Activated B cell treated with CpG ODN at 0.5 μM for 24 hours (primary cell): ENCODE measurements at regions of chrX and their contacts with region 1.

Region 1: DNA sequence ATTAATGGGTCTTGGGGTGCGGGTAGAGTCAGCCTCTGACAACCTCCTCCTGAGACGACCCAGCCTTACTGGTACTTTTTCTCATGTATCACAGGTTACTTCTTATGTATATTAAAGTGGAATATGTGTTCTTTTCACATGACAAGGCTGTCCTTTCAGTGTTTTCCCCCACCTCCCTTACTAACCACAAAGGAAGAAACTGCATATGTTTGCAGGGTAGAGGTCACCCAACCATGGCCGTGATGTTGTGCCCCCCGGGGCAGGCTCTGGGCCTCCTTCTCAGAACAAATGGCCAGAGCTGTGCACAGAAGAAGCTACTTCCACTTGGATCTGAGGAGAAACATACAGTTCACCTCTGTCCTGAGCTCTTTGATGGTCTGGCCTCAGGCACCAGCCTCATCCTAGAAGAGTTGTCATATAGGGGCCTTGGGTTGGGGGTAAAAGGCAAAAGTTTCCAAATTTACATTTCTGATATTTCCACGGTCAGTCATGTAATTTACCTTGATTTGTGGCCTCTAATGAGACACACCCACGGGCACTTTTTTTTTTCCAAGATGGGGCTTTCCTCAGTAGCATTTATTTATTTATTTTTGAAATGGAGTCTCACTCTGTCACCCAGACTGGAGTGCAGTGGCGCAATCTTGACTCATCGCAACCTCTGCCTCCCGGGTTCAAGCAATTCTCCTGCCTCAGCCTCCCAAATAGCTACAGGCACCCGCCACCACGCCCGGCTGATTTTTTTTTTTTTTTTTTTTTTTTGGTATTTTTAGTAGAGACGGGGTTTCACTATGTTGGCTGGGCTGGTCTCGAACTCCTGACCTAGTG is 1.9 kb downstream of the SOWAHD start:
- DNase-seq: no peak
- ATAC-seq: peak; percentile 22
- H3K4me3 Mint-ChIP-seq: peak overlapping the region; percentile 82
- H3K27ac Mint-ChIP-seq: peak overlapping the region; percentile 86
- H3K4me1 Mint-ChIP-seq: peaks cover 74% of the 10 kb centered on the region
- H3K27me3 Mint-ChIP-seq: no peaks in the 10 kb centered on the region
- CTCF ChIP-seq: no peak

Region 2: DNA sequence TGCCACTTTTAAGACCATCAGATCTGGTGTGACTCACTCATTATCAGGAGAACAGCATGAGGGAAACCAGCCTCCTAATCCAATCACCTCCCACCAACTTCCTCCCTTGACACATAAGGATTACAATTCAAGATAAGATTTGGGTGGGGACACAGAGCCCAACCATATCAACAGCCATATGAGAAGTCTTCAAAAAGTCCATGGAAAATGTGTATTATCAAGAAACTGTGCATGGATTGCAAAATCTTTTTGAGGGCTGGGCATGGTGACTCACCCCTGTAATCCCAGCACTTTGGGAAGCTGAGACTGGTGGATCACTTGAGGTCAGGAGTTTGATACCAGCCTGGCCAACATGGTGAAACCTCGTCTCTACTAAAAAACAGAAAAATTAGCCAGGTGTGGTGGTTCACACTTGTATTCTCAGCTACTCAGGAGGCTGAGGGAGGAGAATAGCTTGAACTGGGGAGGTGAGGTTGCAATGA is 49.0 kb after region 1 on chrX:
- CTCF ChIA-PET with region 1: no interaction called
- POLR2A ChIA-PET with region 1: interaction called, 11 read pairs
- intact Hi-C with region 1: no loop called
- DNase-seq: no peak
- ATAC-seq: no peak
- H3K4me3 Mint-ChIP-seq: no peak overlapping the region
- H3K27ac Mint-ChIP-seq: no peak overlapping the region
- H3K4me1 Mint-ChIP-seq: no peaks in the 10 kb centered on the region
- H3K27me3 Mint-ChIP-seq: no peaks in the 10 kb centered on the region
- CTCF ChIP-seq: no peak